ENCODE measurements at regions of chr19 and their contacts with region 1.

Region 1: DNA sequence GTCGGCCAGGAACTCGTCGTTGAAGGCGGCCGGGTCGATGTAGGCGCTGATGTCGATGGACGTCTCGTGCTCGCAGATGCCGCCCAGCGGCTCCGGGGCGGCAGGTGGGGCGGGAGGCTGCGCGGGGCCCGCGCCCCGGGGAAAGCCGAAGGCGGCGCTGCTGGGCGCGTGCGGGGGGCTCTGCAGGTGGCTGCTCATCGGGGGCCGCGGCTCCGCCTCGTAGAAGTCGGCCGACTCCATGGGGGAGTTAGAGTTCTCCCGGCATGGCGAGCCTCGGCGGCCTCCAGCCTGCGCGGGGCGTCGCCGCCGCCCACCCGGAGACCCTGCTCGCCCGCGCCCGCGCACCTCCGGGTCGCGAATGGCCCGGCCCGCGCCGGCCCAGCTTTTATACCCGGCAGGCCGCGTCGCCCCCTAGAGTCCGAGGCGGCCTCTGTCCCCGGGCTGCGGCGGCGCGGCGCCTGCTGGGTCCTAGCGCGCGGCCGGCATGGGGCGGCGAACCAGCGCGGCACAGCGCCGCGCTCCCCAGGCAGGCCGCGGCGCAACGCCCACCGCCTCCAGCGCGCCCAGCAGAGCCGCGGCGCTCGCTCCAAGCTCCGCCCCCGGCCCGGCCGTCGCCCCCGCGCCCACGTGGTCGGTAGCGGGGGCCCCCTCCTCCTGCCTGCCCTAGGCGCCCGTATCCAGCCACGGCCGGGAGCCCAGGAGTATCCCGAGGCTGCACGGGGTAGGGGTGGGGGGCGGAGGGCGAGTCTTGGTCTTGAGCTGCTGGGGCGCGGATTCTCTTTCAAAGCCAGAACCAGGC is at the start of gene CEBPA:
- DNase-seq: no peak
- H3K4me3 ChIP-seq: peak within 1 kb of the TSS; percentile 74 to 89 (median 80)
- H3K27ac ChIP-seq: peak within 1 kb of the TSS; percentile 81 to 94 (median 88)
- H3K4me1 ChIP-seq: peaks cover 13 to 59% (median 46%) of the 10 kb centered on the region in 4 donors
- H3K27me3 ChIP-seq: peaks cover 0 to 31% (median 0%) of the 10 kb centered on the region in 4 donors
- CTCF ChIP-seq: peak; percentile 41 to 63 (median 62)
- EP300 ChIP-seq: no peak
- POLR2A ChIP-seq: peak; percentile 75
- total RNA-seq, gene CEBPA: 5.1 to 15.9 (median 8.9) TPM

Region 2: DNA sequence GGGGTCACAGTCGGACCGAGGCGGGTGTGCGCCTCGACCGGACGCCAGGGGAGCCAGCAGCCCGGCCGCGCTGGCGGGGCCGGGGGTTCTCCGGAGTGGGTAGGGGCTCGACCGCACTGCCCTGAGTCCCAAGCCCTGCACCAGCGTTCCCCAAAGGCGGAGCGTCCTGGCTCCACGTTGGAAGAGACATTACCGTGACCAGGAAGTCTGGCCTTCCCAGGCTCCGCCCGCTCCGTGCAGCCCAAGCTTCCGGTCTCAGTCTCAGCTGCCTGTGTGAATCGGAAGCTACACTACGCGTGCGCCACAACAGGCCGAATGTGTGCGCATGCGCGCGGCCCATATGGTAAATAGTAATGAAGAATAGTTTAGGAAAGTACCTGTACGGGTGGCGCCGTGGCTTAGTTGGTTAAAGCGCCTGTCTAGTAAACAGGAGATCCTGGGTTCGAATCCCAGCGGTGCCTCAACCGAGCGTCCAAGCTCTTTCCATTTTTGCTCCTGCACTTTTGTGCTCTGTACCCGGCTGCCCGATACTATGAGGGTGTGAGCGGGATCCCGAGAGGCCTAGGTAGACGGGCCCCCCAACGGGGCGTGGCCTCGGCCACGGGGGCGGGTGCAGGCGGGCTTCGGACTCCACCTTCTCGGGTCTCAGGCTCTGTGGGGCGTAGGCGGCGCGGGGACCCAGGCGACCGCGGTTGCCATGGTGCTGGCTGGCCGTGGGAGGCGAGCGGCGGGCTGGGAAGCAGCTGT is 125.5 kb before region 1 on chr19:
- intact Hi-C with region 1: loop called (anchors 5 kb)
- DNase-seq: peak; percentile 100
- H3K4me3 ChIP-seq: peak overlapping the region; percentile 70 to 96 (median 82)
- H3K27ac ChIP-seq: peak overlapping the region; percentile 88 to 96 (median 92)
- H3K4me1 ChIP-seq: peaks cover 24 to 46% (median 32%) of the 10 kb centered on the region in 4 donors
- H3K27me3 ChIP-seq: no peaks in the 10 kb centered on the region
- CTCF ChIP-seq: peak in 2 of 3 experiments; percentile 4 to 44
- EP300 ChIP-seq: no peak
- POLR2A ChIP-seq: peak; percentile 29

Region 3: DNA sequence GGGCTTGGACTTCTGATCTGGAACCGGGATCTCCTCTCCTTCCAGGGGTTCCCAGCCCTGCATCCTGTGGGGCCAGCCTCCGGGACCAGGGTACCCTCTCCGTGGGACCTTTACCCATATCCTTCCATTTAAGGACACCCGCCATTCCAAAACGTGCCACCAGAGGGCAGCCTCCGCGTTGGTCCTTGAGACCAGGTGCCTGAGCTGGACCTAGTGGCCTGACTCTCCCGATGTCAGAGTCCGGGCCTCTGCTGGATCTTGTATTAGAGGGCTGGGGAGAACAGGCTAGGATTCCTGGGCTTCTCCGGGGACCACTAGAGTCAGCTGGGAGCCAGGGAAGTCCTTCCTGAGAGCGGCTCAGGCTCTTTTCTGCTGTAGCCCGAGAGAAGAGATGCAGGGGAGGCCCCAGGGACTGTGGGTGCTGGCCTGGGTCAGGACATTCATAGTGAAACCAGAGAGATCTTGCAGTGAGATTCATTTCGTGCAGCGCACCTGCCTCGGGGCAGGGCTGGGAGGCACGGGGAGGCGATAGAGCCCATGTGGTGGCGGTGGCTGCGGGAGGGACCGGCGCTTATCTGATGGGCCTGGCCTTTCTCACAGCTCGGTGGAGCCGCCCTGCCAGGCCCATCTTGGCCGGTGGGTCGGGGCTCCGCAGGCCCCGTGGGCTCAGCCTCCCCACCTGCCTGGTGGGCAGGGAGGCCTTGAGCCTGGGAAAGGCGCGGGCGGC is 66.9 kb before region 1 on chr19:
- intact Hi-C with region 1: loop called (anchors 5 kb)
- DNase-seq: peak; percentile 96
- H3K4me3 ChIP-seq: no peak overlapping the region
- H3K27ac ChIP-seq: no peak overlapping the region
- H3K4me1 ChIP-seq: peaks cover 0 to 7% (median 2%) of the 10 kb centered on the region in 4 donors
- H3K27me3 ChIP-seq: peaks cover 0 to 43% (median 2%) of the 10 kb centered on the region in 4 donors
- CTCF ChIP-seq: peak; percentile 83 to 94 (median 85)
- EP300 ChIP-seq: no peak
- POLR2A ChIP-seq: no peak

Region 4: DNA sequence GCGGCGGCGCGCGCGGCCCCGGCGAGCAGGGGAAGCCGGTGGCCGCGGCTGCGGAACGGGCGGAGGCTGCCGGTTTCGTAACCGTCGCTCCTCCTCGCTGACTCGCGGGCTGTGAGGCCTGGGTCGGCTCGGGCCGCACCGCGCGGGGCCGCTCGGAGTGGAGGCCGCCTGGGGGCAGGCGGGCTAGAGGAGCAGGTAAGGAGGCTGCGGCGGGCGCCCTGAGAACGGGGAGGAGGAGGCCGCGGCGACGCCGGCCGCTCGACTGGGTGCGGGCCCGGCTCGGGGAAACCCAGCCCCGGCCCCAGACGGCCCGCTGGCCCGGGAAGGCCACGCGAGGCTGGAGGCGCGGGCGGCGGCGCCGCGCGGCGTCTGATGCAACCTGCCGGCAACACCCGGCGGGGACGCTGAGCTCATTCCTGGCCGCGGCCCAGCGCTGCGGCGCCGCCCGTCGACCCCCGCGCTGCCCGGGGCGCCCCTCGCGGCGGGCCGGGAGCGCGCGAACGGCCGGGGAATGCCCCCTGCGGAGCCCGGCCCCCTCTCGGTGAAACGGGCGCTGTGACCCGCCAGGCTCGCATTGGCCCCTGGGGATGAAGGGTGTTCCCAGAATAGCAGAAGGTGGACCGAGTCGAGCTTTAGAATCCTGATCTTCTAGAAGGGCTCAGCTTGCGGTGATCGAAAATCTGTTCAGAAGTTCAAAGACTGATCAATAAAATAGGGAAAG is 71.5 kb after region 1 on chr19 and contains the start of gene CEBPG:
- intact Hi-C with region 1: loop called (anchors 2 kb)
- DNase-seq: no peak
- H3K4me3 ChIP-seq: peak within 1 kb of the TSS; percentile 88 to 95 (median 88)
- H3K27ac ChIP-seq: peak within 1 kb of the TSS; percentile 97 to 99 (median 99)
- H3K4me1 ChIP-seq: peaks cover 25 to 51% (median 46%) of the 10 kb centered on the region in 4 donors
- H3K27me3 ChIP-seq: no peaks in the 10 kb centered on the region
- CTCF ChIP-seq: peak; percentile 7 to 36 (median 27)
- EP300 ChIP-seq: no peak
- POLR2A ChIP-seq: peak; percentile 87
- total RNA-seq, gene CEBPG: 23.1 to 30.3 (median 28.5) TPM

Region 5: DNA sequence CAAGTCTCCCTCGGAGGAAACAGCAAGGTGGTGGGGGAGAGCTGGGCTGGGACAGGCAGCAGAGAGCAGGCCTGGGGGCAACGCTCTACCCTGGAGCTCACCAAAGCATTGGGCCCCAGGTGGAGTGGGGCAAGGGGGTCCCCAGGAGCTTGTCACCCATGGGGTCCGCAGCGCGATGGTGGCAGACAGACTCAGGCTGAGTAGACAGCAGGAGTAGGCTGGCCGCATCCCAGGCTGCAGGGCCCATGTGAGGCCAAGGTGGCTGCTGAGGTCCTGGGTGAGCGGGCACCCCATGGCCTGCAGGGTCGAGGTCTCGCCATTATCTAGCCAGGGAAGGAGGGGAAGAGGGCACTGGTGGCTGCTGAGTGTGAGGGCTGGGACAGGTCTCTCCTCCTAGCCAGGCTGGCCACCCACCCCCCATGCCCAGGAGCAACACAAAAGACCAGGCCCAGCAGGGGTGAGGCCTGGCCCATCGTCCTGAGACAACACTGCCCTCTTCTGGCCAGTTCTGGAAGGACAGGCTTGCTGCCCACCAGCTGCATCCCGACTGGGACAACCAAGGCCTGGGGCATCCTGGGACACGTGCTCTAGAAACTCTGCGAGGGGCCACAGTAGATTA is 104.3 kb after region 1 on chr19:
- intact Hi-C with region 1: loop called (anchors 10 kb)
- DNase-seq: peak; percentile 95
- H3K4me3 ChIP-seq: no peak overlapping the region
- H3K27ac ChIP-seq: no peak overlapping the region
- H3K4me1 ChIP-seq: peaks cover 4 to 27% (median 16%) of the 10 kb centered on the region in 4 donors
- H3K27me3 ChIP-seq: no peaks in the 10 kb centered on the region
- CTCF ChIP-seq: peak; percentile 95 to 97 (median 97)
- EP300 ChIP-seq: no peak
- POLR2A ChIP-seq: no peak

Measured in esophagus muscularis mucosa (tissue), 4 donors.